Activated naive CD8-positive, alpha-beta T cell treated with anti-CD3 and anti-CD28 coated beads, Interleukin-2, amount 10 ng/mL, durations not matched to agents 7 days and 5 days (primary cell): ENCODE measurements at regions of chr11 and their contacts with region 1.

Region 1: GRCh38 chr11:6377902-6378639 is 12.2 kb upstream of the SMPD1 start:
- DNase-seq: no peak
- ATAC-seq: peak; percentile 91
- H3K4me3 Mint-ChIP-seq: peak overlapping the region; percentile 82
- H3K27ac Mint-ChIP-seq: peak overlapping the region; percentile 97
- H3K4me1 Mint-ChIP-seq: peaks cover 32% of the 10 kb centered on the region
- H3K27me3 Mint-ChIP-seq: peaks cover 2% of the 10 kb centered on the region

Region 2: DNA sequence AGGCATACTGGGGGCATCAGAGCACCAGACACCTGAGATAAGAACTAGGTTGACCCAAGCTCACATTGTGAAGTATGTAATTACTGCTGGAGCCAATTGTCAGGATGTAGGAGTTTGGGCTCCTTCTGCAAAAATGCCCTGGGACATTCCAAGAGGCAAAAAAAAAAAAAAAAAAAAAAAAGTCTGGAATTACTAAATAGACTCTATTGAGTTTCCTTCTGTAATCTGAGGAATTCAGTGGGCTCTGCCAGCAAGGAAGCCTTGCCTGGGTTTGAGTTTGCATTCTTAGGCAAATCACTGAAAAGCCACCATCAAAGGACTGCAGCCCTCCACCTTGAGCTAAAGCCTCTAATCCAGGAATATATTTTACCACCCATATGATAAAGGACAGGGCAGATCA is 49.8 kb before region 1 on chr11:
- POLR2A ChIA-PET with region 1: no interaction called
- DNase-seq: no peak
- ATAC-seq: no peak
- H3K4me3 Mint-ChIP-seq: no peak overlapping the region
- H3K27ac Mint-ChIP-seq: no peak overlapping the region
- H3K4me1 Mint-ChIP-seq: no peaks in the 10 kb centered on the region
- H3K27me3 Mint-ChIP-seq: peaks cover 33% of the 10 kb centered on the region

Region 3: DNA sequence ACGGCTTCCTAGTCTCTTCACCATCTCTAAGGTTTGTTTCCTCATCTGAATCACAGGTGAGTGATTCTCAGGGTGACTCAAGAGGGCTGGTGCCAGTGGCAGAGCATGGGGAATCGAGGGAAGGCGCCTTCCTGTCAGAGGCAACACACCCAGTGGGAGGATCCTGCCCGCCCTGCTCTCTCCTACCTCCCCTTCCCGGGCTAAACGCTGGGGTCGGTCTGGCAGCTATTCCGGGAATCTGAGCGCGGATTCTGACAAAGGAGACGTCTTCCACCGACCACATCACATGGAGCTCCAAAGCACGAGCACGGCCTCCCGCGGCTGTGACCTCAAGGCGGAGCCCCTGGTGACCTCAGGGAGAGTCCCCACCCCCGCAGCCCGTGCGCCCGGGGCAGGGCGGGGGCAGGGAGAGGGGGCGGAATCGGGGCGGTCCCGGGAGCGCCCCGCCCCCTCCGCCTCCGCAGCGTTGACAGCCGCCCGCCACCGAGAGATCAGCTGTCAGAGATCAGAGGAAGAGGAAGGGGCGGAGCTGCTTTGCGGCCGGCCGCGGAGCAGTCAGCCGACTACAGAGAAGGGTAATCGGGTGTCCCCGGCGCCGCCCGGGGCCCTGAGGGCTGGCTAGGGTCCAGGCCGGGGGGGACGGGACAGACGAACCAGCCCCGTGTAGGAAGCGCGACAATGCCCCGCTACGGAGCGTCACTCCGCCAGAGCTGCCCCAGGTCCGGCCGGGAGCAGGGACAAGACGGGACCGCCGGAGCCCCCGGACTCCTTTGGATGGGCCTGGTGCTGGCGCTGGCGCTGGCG is 12.1 kb after region 1 on chr11 and contains the start of gene SMPD1:
- POLR2A ChIA-PET with region 1: interaction called, 17 read pairs
- DNase-seq: peak; percentile 92
- ATAC-seq: peak; percentile 86
- H3K4me3 Mint-ChIP-seq: peak within 1 kb of the TSS; percentile 96
- H3K27ac Mint-ChIP-seq: peak within 1 kb of the TSS; percentile 95
- H3K4me1 Mint-ChIP-seq: peaks cover 39% of the 10 kb centered on the region
- H3K27me3 Mint-ChIP-seq: no peaks in the 10 kb centered on the region
- total RNA-seq, gene SMPD1: 40.7 to 42.6 TPM

Region 4: GRCh38 chr11:6402561-6402981 is 24.5 kb after region 1 on chr11:
- POLR2A ChIA-PET with region 1: interaction called, 29 read pairs
- DNase-seq: peak; percentile 70
- ATAC-seq: peak; percentile 90
- H3K4me3 Mint-ChIP-seq: peak overlapping the region; percentile 83
- H3K27ac Mint-ChIP-seq: peak overlapping the region; percentile 94
- H3K4me1 Mint-ChIP-seq: peaks cover 56% of the 10 kb centered on the region
- H3K27me3 Mint-ChIP-seq: no peaks in the 10 kb centered on the region

Region 5: GRCh38 chr11:6419009-6419631 is 41.0 kb after region 1 on chr11 and contains the start of gene APBB1:
- POLR2A ChIA-PET with region 1: interaction called, 20 read pairs
- DNase-seq: peak; percentile 87
- ATAC-seq: peak; percentile 64
- H3K4me3 Mint-ChIP-seq: peak within 1 kb of the TSS; percentile 76
- H3K27ac Mint-ChIP-seq: peak within 1 kb of the TSS; percentile 43
- H3K4me1 Mint-ChIP-seq: peaks cover 7% of the 10 kb centered on the region
- H3K27me3 Mint-ChIP-seq: peaks cover 32% of the 10 kb centered on the region
- total RNA-seq, gene APBB1: 64.0 to 69.2 TPM

Region 6: DNA sequence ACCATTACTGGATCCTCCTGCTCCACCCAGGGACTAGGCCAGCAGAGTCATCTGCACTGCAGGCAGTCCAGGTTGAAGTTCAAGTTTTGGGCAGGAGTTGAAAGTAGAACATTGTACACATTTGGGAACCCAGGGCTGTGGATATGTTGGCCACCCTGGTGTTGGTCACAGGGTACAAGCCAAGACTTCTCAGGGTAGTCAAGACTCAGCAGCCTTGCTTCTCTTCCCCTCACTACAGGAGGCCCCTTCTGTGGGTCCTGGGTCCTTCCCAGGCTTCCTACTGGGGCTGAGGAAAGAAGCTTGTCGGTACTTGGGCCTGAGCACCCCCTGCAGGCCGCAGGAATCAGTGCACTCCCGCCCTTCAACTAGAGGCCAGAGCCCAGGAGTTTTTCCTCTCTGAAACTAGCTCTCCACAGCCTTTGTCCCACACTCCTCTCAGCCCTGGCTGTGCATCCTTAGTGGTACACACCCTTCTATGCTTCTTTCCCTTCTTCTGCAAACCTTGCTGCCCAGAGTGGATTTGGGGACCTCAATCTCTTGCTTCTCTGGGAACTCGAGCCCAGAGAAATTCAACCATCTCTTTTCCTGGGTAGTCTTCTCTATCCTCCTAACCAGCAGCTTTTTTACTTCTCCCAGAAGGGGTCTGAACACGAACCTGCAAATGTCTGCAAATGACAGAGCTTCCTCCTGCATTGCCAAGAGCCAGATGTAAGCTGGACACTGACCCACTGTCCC is 65.4 kb after region 1 on chr11:
- POLR2A ChIA-PET with region 1: interaction called, 31 read pairs
- DNase-seq: peak; percentile 67
- ATAC-seq: peak; percentile 51
- H3K4me3 Mint-ChIP-seq: no peak overlapping the region
- H3K27ac Mint-ChIP-seq: no peak overlapping the region
- H3K4me1 Mint-ChIP-seq: no peaks in the 10 kb centered on the region
- H3K27me3 Mint-ChIP-seq: peaks cover 8% of the 10 kb centered on the region